CD4-positive, alpha-beta T cell (primary cell): ENCODE measurements at regions of chr7 and their contacts with region 1.

Region 1: DNA sequence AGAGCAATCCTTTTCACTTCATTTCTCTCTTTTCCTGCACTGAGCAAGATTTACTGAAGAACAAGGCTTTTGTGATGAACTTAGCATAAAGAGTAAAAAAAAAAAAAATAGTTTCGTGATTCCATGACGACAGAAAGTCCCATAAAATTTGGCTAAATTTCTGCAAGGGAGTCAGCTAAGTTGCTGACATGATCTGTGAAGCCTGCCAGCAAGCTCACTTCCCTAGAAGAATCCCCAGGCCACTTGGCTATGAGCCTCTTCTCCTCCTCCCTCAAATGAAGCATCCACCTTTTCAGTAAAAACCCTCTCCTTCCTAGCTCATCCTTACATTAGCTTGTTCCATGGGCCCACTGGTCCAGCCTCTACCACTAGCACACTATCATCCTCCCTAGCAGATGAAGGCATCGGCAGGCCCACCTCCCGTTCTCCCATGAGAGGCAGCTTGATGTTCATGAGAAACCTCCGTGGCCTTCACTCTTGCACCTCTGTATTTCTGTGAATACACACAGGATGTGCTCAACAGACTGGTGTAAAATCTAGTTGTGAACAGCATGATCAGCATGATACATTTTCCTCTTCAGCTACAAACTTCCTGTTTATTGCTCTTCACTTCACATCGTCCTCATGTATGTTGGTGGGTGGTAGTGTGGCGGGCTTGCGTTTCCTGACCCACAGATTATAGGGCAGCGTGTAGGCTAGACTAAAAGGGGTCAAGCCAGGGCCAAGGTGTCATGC is 30.9 kb downstream of the GIMAP8 start:
- DNase-seq: peak; percentile 36 to 90 (median 58)
- ATAC-seq: peak; percentile 59
- H3K4me3 ChIP-seq: peak overlapping the region; percentile 20
- H3K4me3 Mint-ChIP-seq: peak overlapping the region; percentile 84
- H3K27ac ChIP-seq: peak overlapping the region; percentile 92 to 95
- H3K27ac Mint-ChIP-seq: peak overlapping the region; percentile 97
- H3K4me1 ChIP-seq: peaks cover 76% of the 10 kb centered on the region
- H3K4me1 Mint-ChIP-seq: peaks cover 95% of the 10 kb centered on the region
- H3K27me3 ChIP-seq: no peaks in the 10 kb centered on the region
- H3K27me3 Mint-ChIP-seq: no peaks in the 10 kb centered on the region
- CTCF ChIP-seq: no peak

Region 2: DNA sequence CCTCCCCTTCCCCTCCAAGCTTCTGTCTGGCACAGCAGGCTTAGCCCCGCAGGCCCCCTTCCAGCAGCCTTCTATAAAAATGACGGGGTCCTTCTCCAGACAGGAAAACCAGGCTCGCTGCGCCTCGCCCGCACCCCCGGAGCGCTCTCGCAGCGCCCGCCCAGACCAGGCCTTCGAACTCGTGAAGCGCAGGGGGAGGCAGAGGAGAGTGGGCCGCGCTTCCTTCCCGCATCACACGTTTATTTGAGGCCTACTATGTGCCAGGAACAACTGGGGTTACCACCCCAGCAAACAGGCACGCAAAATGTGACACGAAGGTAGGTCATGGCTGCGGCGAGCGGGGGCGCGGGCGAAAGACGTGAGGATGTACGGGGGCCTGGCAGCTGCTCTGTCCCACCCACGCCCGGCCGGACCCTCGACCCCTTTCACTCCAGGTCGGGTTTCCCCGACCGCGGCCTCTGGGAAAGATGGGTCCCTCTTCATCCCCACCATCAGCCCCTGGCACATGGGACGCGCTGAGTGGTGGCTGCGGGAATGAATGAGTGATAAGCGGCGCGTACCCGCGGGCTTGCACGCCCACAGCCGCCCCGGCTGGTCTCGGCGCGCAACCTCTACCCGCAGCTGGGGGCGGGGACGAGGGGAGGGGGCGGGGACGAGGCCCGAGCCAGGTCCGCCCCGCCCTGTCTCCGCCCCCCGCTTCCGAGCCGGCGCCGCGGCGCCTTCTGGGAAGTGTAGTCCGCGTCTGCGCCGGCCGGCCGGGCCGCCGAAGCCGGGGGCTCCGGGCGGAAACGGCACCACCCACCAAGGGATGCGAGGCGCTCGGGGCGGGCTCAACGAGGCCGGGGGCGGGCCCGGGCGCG is 767.1 kb before region 1 on chr7:
- CTCF ChIA-PET with region 1: no interaction called
- POLR2A ChIA-PET with region 1: no interaction called
- intact Hi-C with region 1: no loop called
- DNase-seq: peak; percentile 84 to 97 (median 94)
- ATAC-seq: peak; percentile 91
- H3K4me3 ChIP-seq: peak overlapping the region; percentile 80
- H3K4me3 Mint-ChIP-seq: peak overlapping the region; percentile 86
- H3K27ac ChIP-seq: no peak overlapping the region
- H3K27ac Mint-ChIP-seq: peak overlapping the region; percentile 66
- H3K4me1 ChIP-seq: peaks cover 29% of the 10 kb centered on the region
- H3K4me1 Mint-ChIP-seq: peaks cover 21% of the 10 kb centered on the region
- H3K27me3 ChIP-seq: no peaks in the 10 kb centered on the region
- H3K27me3 Mint-ChIP-seq: no peaks in the 10 kb centered on the region
- CTCF ChIP-seq: no peak

Region 3: DNA sequence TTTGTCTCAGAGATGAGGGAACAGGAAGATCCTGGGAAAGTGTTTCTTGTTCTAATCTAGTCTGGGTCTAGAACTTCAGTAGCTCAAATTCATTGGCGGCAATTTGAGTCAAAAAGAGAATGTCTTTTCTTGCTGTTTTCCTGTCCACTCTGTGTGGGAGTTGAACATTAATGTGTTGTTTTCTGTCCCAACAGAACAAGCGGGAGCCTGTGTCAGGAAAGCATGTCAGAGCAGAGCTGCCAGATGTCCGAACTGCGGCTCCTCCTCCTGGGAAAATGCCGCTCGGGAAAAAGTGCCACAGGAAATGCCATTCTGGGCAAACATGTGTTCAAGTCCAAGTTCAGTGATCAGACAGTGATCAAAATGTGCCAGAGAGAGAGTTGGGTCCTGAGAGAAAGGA is 14.9 kb before region 1 on chr7:
- CTCF ChIA-PET with region 1: no interaction called
- POLR2A ChIA-PET with region 1: interaction called, 13 read pairs
- intact Hi-C with region 1: loop called in 1 of 2 experiments (anchors 2 kb)
- DNase-seq: no peak
- ATAC-seq: no peak
- H3K4me3 ChIP-seq: no peak overlapping the region
- H3K4me3 Mint-ChIP-seq: peak overlapping the region; percentile 17
- H3K27ac ChIP-seq: no peak overlapping the region
- H3K27ac Mint-ChIP-seq: peak overlapping the region; percentile 81
- H3K4me1 ChIP-seq: peaks cover 52% of the 10 kb centered on the region
- H3K4me1 Mint-ChIP-seq: peaks cover 97% of the 10 kb centered on the region
- H3K27me3 ChIP-seq: no peaks in the 10 kb centered on the region
- H3K27me3 Mint-ChIP-seq: no peaks in the 10 kb centered on the region
- CTCF ChIP-seq: no peak

Region 4: GRCh38 chr7:150502519-150502918 is 21.2 kb after region 1 on chr7:
- CTCF ChIA-PET with region 1: interaction called, 8 read pairs
- POLR2A ChIA-PET with region 1: interaction called, 111 read pairs
- intact Hi-C with region 1: loop called (anchors 1 to 2 kb)
- DNase-seq: peak in 6 of 14 experiments; percentile 38 to 85 (median 64)
- ATAC-seq: peak; percentile 83
- H3K4me3 ChIP-seq: no peak overlapping the region
- H3K4me3 Mint-ChIP-seq: peak overlapping the region; percentile 50
- H3K27ac ChIP-seq: peak overlapping the region; percentile 66 to 69
- H3K27ac Mint-ChIP-seq: peak overlapping the region; percentile 88
- H3K4me1 ChIP-seq: peaks cover 44% of the 10 kb centered on the region
- H3K4me1 Mint-ChIP-seq: peaks cover 89% of the 10 kb centered on the region
- H3K27me3 ChIP-seq: no peaks in the 10 kb centered on the region
- H3K27me3 Mint-ChIP-seq: no peaks in the 10 kb centered on the region
- CTCF ChIP-seq: no peak

Region 5: DNA sequence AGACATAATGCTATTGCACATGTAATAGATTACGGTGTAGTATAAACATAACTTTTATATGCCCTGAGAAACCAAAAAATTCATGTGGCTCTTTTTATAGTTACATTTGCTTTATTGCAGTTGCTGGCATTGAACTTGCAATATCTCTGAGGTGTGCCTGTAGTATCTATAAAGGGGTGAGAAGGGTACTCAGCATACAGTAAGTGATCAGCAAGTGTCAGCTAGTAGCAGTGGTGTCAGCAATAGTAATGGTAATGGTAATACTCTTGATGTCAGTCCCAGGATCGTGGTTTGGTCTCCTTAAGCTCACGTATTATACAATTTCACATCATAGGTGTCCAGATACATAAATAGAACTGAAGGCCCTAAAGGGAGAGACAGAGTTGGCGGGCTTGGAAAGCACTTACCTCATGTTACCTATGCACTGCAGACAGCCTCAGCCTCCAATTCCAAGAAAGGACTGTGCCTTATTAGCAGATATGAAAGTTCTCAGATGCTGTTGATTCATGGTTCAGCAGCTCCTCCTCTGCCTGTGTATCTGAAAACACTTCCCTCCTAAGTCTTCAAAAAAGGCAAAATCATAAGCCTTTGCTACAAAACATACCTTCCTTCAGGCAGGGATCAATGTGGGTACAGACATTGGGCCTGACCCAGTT is 26.7 kb after region 1 on chr7:
- CTCF ChIA-PET with region 1: interaction called, 8 read pairs
- POLR2A ChIA-PET with region 1: interaction called, 312 read pairs
- intact Hi-C with region 1: loop called in 1 of 2 experiments (anchors 2 kb)
- DNase-seq: peak in 5 of 14 experiments; percentile 46 to 54 (median 49)
- ATAC-seq: peak; percentile 43
- H3K4me3 ChIP-seq: peak overlapping the region; percentile 38
- H3K4me3 Mint-ChIP-seq: peak overlapping the region; percentile 84
- H3K27ac ChIP-seq: peak overlapping the region; percentile 3 to 71
- H3K27ac Mint-ChIP-seq: peak overlapping the region; percentile 93
- H3K4me1 ChIP-seq: peaks cover 77% of the 10 kb centered on the region
- H3K4me1 Mint-ChIP-seq: peaks cover 95% of the 10 kb centered on the region
- H3K27me3 ChIP-seq: no peaks in the 10 kb centered on the region
- H3K27me3 Mint-ChIP-seq: no peaks in the 10 kb centered on the region
- CTCF ChIP-seq: no peak